Activated B cell treated with CpG ODN at 0.5 μM for 24 hours (primary cell): ENCODE measurements at regions of chr11 and their contacts with region 1.

Region 1: GRCh38 chr11:93668171-93668570 is 6.7 kb downstream of the CEP295 start:
- DNase-seq: no peak
- ATAC-seq: no peak
- H3K4me3 Mint-ChIP-seq: no peak overlapping the region
- H3K27ac Mint-ChIP-seq: no peak overlapping the region
- H3K4me1 Mint-ChIP-seq: peaks cover 4% of the 10 kb centered on the region
- H3K27me3 Mint-ChIP-seq: no peaks in the 10 kb centered on the region
- CTCF ChIP-seq: no peak

Region 2: DNA sequence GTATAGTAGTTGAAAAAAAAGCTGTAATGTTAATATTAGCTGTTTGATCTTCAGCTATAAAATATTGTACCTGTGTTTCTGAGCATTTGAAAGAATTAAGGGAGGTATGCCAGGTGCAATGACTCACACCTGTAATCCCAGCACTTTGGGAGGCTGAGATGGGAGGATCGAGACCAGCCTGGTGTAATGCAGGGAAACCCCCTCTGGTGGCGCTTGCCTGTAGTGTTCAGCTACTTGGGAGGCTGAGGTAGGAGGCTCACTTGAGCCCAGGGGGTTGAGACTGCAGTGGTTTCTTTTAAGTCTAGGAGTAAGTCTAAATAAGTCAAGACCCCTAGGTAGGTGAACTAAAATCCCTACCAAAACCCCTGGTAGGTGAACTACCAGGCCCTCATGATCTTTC is 36.1 kb after region 1 on chr11:
- CTCF ChIA-PET with region 1: no interaction called
- POLR2A ChIA-PET with region 1: no interaction called
- intact Hi-C with region 1: loop called (anchors 5 kb)
- DNase-seq: no peak
- ATAC-seq: no peak
- H3K4me3 Mint-ChIP-seq: no peak overlapping the region
- H3K27ac Mint-ChIP-seq: no peak overlapping the region
- H3K4me1 Mint-ChIP-seq: peaks cover 8% of the 10 kb centered on the region
- H3K27me3 Mint-ChIP-seq: no peaks in the 10 kb centered on the region
- CTCF ChIP-seq: no peak

Region 3: DNA sequence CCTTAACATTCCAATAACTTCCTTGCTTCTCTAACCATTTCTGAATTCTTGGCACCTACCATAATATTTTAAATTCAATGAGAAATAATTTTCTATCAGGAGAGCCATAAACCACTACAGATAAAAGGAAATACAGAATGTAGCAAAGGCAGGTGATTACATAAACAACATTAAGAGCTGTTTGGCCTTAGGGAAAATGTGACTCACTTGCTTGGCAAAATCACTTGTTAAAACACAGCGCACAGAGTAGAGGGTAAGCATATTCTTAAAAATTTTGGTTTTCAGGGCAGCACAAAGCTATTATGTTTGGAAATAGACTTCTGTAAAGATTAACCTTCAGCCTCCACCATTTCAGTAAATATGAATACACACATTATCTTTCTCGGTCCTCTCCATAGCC is 662.6 kb after region 1 on chr11:
- CTCF ChIA-PET with region 1: no interaction called
- POLR2A ChIA-PET with region 1: no interaction called
- intact Hi-C with region 1: no loop called
- DNase-seq: no peak
- ATAC-seq: no peak
- H3K4me3 Mint-ChIP-seq: no peak overlapping the region
- H3K27ac Mint-ChIP-seq: no peak overlapping the region
- H3K4me1 Mint-ChIP-seq: no peaks in the 10 kb centered on the region
- H3K27me3 Mint-ChIP-seq: no peaks in the 10 kb centered on the region
- CTCF ChIP-seq: no peak